Endothelial cell of umbilical vein (primary cell): ENCODE measurements at regions of chr9 and their contacts with region 1.

Region 1: GRCh38 chr9:27108981-27109541 is at the start of gene TEK:
- DNase-seq: peak; percentile 85
- H3K4me3 ChIP-seq: peak within 1 kb of the TSS; percentile 44 to 99 (median 96)
- H3K27ac ChIP-seq: peak within 1 kb of the TSS; percentile 80
- H3K4me1 ChIP-seq: peaks cover 17% of the 10 kb centered on the region
- H3K27me3 ChIP-seq: no peaks in the 10 kb centered on the region
- CTCF ChIP-seq: no peak
- POLR2A ChIP-seq: peak; percentile 82
- total RNA-seq, gene TEK: 38.9 and 44.1 TPM in 2 replicates

Region 2: DNA sequence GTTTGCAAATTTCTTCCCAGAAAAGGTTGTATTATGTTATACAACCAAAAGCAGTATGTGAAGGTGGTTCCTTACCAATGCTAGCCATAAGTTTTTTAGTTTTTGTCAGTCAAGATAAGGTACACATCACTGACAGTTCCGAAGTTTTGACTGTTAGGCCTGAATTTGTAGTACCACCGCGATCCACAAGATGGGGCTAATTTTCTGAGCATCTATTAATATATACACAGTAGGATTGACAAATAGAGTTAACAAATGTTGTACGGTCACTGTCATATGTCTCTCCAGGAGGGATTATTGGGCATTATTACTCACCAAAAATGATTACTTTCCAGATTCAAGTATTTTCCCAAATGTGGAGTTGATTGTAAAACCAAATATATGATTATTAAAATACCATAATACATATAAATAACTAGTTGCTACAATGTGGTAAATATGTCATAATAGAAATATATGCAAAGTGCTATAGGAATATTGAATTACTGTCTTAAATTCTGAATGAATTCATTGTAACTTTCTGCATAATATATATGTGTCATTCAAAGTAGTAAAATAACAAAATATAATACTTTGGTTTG is 75.1 kb before region 1 on chr9:
- CTCF ChIA-PET with region 1: no interaction called
- POLR2A ChIA-PET with region 1: interaction called, 4 read pairs
- dilution Hi-C with region 1: no loop called
- intact Hi-C with region 1: loop called (anchors 2 kb)
- DNase-seq: peak; percentile 78
- H3K4me3 ChIP-seq: no peak overlapping the region
- H3K27ac ChIP-seq: no peak overlapping the region
- H3K4me1 ChIP-seq: no peaks in the 10 kb centered on the region
- H3K27me3 ChIP-seq: no peaks in the 10 kb centered on the region
- CTCF ChIP-seq: peak; percentile 60 to 62
- POLR2A ChIP-seq: no peak

Region 3: GRCh38 chr9:27053369-27054022 is 55.6 kb before region 1 on chr9:
- CTCF ChIA-PET with region 1: interaction called, 3 read pairs
- POLR2A ChIA-PET with region 1: no interaction called
- dilution Hi-C with region 1: no loop called
- intact Hi-C with region 1: loop called (anchors 1 kb)
- DNase-seq: peak; percentile 98
- H3K4me3 ChIP-seq: peak overlapping the region in 1 of 3 experiments; percentile 45
- H3K27ac ChIP-seq: peak overlapping the region; percentile 64
- H3K4me1 ChIP-seq: peaks cover 22% of the 10 kb centered on the region
- H3K27me3 ChIP-seq: no peaks in the 10 kb centered on the region
- CTCF ChIP-seq: no peak
- POLR2A ChIP-seq: peak; percentile 84

Region 4: DNA sequence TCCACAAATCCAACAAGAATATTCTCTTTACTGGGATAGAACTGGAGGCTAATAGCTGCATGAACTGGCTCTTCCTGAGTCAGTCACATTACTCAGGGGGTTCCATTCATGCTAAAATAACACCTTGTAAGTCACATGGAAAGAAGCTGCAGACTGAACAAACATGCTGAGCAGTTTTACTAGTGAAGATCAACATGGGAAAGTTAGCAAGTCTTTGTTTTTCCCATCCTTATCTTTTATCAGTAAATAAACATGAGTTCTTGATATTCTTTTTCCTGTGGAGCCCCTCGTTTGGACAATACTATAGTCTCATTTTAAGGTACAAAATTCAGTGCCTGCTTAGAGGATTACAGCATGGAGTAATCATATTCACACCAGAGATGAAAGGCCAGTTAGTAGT is 43.8 kb before region 1 on chr9:
- CTCF ChIA-PET with region 1: interaction called, 4 read pairs
- POLR2A ChIA-PET with region 1: no interaction called
- dilution Hi-C with region 1: no loop called
- intact Hi-C with region 1: loop called (anchors 2 kb)
- DNase-seq: peak; percentile 86
- H3K4me3 ChIP-seq: no peak overlapping the region
- H3K27ac ChIP-seq: peak overlapping the region; percentile 26
- H3K4me1 ChIP-seq: peaks cover 23% of the 10 kb centered on the region
- H3K27me3 ChIP-seq: no peaks in the 10 kb centered on the region
- CTCF ChIP-seq: no peak
- POLR2A ChIP-seq: no peak

Region 5: DNA sequence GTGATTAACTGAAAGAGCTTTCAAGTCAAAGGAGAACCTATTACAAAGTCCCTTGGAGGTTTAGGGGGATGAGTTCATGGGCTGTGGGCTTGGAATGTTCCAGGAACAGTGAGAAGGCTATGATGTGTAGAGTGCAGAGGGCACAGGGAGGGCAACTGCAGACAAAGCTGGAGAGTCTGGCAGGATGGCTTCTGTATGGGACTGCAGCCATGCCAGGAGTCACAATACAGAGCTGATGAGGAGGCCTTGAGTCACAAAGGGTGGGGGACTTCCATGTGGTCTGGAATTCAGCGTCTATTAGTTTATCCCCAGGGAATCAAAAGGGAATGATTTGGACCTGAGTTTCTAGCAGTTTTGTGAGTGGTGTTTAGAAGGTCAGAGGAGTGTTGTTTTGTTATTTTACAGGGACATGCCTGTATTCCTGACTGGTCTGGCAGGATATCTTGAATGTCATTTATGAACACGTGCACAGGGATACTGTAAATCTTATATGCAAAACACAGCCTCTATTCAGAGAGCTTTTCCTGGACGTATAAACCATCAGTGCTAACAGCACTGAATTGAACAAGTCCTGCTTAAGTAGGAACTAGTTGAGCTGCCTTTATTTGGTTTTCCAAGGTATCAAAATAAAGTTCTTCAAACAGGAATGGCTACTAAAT is 14.3 kb before region 1 on chr9:
- CTCF ChIA-PET with region 1: interaction called, 19 read pairs
- POLR2A ChIA-PET with region 1: no interaction called
- dilution Hi-C with region 1: no loop called
- intact Hi-C with region 1: no loop called
- DNase-seq: peak; percentile 74
- H3K4me3 ChIP-seq: no peak overlapping the region
- H3K27ac ChIP-seq: no peak overlapping the region
- H3K4me1 ChIP-seq: peaks cover 6% of the 10 kb centered on the region
- H3K27me3 ChIP-seq: no peaks in the 10 kb centered on the region
- CTCF ChIP-seq: no peak
- POLR2A ChIP-seq: no peak

Region 6: GRCh38 chr9:27184556-27185351 is 75.7 kb after region 1 on chr9:
- CTCF ChIA-PET with region 1: no interaction called
- POLR2A ChIA-PET with region 1: no interaction called
- dilution Hi-C with region 1: no loop called
- intact Hi-C with region 1: loop called (anchors 2 kb)
- DNase-seq: peak; percentile 92
- H3K4me3 ChIP-seq: no peak overlapping the region
- H3K27ac ChIP-seq: peak overlapping the region; percentile 36
- H3K4me1 ChIP-seq: peaks cover 39% of the 10 kb centered on the region
- H3K27me3 ChIP-seq: no peaks in the 10 kb centered on the region
- CTCF ChIP-seq: no peak
- POLR2A ChIP-seq: no peak